ENCODE measurements at regions of chr22 and their contacts with region 1.

Region 1: GRCh38 chr22:10780281-10780680 is 4747.7 kb upstream of the OR11H1 start:
- DNase-seq: no peak
- ATAC-seq: no peak; the same call in 1 of the 3 replicates
- H3K4me3 ChIP-seq: no peak overlapping the region
- H3K27ac ChIP-seq: no peak overlapping the region
- H3K4me1 ChIP-seq: no peaks in the 10 kb centered on the region
- H3K27me3 ChIP-seq: no peaks in the 10 kb centered on the region
- CTCF ChIP-seq: no peak
- EP300 ChIP-seq: no peak
- POLR2A ChIP-seq: no peak
- RAD21 ChIP-seq: no peak

Region 2: GRCh38 chr22:10727393-10727792 is 52.9 kb before region 1 on chr22:
- CTCF ChIA-PET with region 1: no interaction called
- POLR2A ChIA-PET with region 1: no interaction called
- in situ Hi-C with region 1: no loop called
- intact Hi-C with region 1: no loop called
- DNase-seq: no peak
- ATAC-seq: no peak
- H3K4me3 ChIP-seq: no peak overlapping the region
- H3K27ac ChIP-seq: no peak overlapping the region
- H3K4me1 ChIP-seq: no peaks in the 10 kb centered on the region
- H3K27me3 ChIP-seq: no peaks in the 10 kb centered on the region
- CTCF ChIP-seq: no peak
- EP300 ChIP-seq: no peak
- POLR2A ChIP-seq: no peak
- RAD21 ChIP-seq: no peak

Region 3: GRCh38 chr22:10741210-10741609 is 39.1 kb before region 1 on chr22:
- CTCF ChIA-PET with region 1: no interaction called
- POLR2A ChIA-PET with region 1: no interaction called
- in situ Hi-C with region 1: no loop called
- intact Hi-C with region 1: no loop called
- DNase-seq: no peak
- ATAC-seq: peak; percentile 39
- H3K4me3 ChIP-seq: no peak overlapping the region
- H3K27ac ChIP-seq: no peak overlapping the region
- H3K4me1 ChIP-seq: no peaks in the 10 kb centered on the region; a peak in 1 of 5 replicates
- H3K27me3 ChIP-seq: no peaks in the 10 kb centered on the region
- CTCF ChIP-seq: no peak
- EP300 ChIP-seq: no peak
- POLR2A ChIP-seq: no peak
- RAD21 ChIP-seq: no peak

Region 4: GRCh38 chr22:11066458-11067285 is 286.4 kb after region 1 on chr22:
- CTCF ChIA-PET with region 1: no interaction called
- POLR2A ChIA-PET with region 1: no interaction called
- in situ Hi-C with region 1: loop called (anchors 5 kb)
- intact Hi-C with region 1: no loop called
- DNase-seq: peak in 3 of 4 experiments; percentile 26 to 31 (median 28)
- ATAC-seq: peak; percentile 26; the same call in 1 of the 3 replicates
- H3K4me3 ChIP-seq: peak overlapping the region; percentile 12
- H3K27ac ChIP-seq: no peak overlapping the region
- H3K4me1 ChIP-seq: no peaks in the 10 kb centered on the region
- H3K27me3 ChIP-seq: no peaks in the 10 kb centered on the region
- CTCF ChIP-seq: no peak
- EP300 ChIP-seq: no peak
- POLR2A ChIP-seq: no peak
- RAD21 ChIP-seq: no peak

Measured in K562 (cell line).